Colonic mucosa (tissue), 4 donors: ENCODE measurements at regions of chr3 and their contacts with region 1.

Region 1: GRCh38 chr3:189947948-189948723 is 172.6 kb downstream of the P3H2 start:
- DNase-seq: peak; percentile 46
- H3K4me3 ChIP-seq: no peak overlapping the region
- H3K27ac ChIP-seq: no peak overlapping the region
- H3K4me1 ChIP-seq: no peaks in the 10 kb centered on the region
- H3K27me3 ChIP-seq: no peaks in the 10 kb centered on the region
- CTCF ChIP-seq: peak; percentile 49

Region 2: DNA sequence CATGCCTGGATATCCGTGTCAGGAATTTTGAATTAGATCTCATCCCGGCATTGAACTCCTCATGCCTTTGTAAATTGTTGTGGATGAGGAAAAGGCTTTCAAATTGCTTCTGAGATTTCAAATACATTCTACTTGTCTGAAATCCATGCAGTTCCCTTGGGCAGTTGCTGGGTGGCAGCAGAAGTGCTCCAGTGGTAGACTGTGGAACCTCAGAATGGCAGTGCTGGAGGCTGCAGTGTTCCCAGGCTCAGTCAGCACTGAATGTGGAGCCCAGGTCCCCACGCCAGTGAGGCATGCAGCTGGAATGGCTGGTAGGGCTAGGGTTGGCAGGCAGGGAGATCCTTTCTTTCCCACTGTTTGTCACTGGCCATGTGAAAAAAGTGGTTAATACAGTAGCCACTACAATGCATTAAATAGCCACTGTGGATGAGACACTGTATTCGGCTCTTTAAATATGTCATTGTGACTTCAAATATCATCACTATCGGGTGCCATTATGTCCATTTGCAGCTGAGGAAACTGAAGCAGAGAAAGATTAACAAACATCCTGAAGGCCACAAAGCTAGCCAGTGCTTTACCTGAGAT is 677.8 kb before region 1 on chr3:
- intact Hi-C with region 1: loop called (anchors 5 kb)
- DNase-seq: peak; percentile 67
- H3K4me3 ChIP-seq: no peak overlapping the region
- H3K27ac ChIP-seq: no peak overlapping the region
- H3K4me1 ChIP-seq: no peaks in the 10 kb centered on the region
- H3K27me3 ChIP-seq: no peaks in the 10 kb centered on the region
- CTCF ChIP-seq: peak; percentile 56

Region 3: GRCh38 chr3:189512039-189512438 is 436.1 kb before region 1 on chr3:
- intact Hi-C with region 1: loop called (anchors 10 kb)
- DNase-seq: no peak
- H3K4me3 ChIP-seq: no peak overlapping the region
- H3K27ac ChIP-seq: no peak overlapping the region
- H3K4me1 ChIP-seq: no peaks in the 10 kb centered on the region
- H3K27me3 ChIP-seq: no peaks in the 10 kb centered on the region
- CTCF ChIP-seq: no peak

Region 4: DNA sequence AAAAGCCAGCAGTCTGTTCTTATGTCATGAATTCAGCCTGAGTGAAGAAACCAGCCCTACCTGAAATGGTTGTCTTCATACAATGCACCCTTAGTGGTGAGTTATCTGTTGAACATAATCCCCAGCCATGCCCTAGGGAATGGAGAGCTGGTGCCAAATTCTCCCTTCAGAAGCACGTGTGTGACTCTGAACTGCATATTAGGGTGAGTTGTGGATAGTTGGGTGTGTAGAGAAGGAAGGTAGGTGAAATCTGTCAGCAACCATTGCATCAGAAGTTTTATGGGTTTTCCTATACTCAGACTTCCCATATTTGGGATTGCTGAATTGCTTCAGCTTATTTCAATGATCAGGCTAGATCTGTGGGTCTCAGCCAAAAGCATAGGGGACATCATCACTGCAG is 363.5 kb before region 1 on chr3:
- intact Hi-C with region 1: no loop called
- DNase-seq: no peak
- H3K4me3 ChIP-seq: no peak overlapping the region
- H3K27ac ChIP-seq: no peak overlapping the region
- H3K4me1 ChIP-seq: no peaks in the 10 kb centered on the region
- H3K27me3 ChIP-seq: no peaks in the 10 kb centered on the region
- CTCF ChIP-seq: no peak

Region 5: GRCh38 chr3:189652042-189652441 is 296.1 kb before region 1 on chr3:
- intact Hi-C with region 1: loop called (anchors 10 kb)
- DNase-seq: peak; percentile 22
- H3K4me3 ChIP-seq: no peak overlapping the region
- H3K27ac ChIP-seq: no peak overlapping the region
- H3K4me1 ChIP-seq: no peaks in the 10 kb centered on the region
- H3K27me3 ChIP-seq: no peaks in the 10 kb centered on the region
- CTCF ChIP-seq: peak; percentile 29